ENCODE measurements at regions of chr11 and their contacts with region 1.

Region 1: DNA sequence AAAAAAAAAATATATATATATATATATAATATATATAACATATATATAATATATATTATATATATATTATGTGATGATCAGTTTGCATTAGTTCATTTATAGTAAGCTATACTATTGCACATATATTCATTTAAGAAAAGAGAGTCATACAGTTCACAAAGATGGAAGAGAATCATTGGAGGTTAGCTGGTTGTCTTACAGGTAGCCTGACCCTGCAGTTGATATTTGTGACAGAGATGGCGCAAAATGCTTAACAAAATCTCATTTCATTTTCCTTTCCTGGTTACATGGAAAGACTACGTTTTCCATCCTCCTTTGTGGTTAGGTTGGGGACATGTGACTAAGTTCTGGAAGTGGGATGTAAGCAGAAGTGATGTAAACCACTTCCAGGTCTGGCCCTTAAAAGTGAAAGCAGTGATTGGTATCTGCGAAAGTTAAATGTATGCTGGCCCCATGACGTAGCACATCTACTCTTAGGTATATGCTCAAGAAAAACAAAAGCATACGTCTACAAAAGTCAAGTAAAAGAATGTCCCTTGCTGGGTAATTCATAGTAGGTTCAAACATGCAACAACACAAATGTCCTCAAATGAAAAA is 7.2 kb upstream of the TMEM135 start:
- DNase-seq: peak; percentile 15
- ATAC-seq: no peak
- H3K4me3 ChIP-seq: no peak overlapping the region
- H3K27ac ChIP-seq: no peak overlapping the region
- H3K4me1 ChIP-seq: peaks cover 16% of the 10 kb centered on the region
- H3K27me3 ChIP-seq: no peaks in the 10 kb centered on the region
- CTCF ChIP-seq: 0 out of 2 replicates have a peak, but pooled peaks have one; percentile 10

Region 2: DNA sequence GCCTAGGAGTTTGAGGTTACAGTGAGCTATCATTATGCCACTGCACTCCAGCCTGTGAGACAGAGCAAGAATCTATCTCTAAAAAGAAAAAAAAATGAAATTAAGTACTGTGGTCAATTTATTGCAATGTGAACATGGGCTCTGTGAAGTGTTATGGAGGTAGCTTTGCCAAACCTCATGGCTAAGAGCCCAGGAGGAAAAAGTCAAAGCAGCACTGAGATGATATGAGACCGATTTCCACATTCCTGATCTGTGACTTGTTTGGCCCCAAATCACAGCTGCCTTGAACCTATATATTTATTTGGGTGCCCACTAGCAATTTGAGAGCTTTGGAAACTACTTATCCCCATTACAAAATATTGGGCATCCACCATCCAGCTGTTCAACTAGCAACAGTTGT is 22.6 kb before region 1 on chr11:
- CTCF ChIA-PET with region 1: no interaction called
- POLR2A ChIA-PET with region 1: interaction called, 3 read pairs
- intact Hi-C with region 1: loop called (anchors 1 kb)
- DNase-seq: peak; percentile 31
- ATAC-seq: no peak
- H3K4me3 ChIP-seq: no peak overlapping the region
- H3K27ac ChIP-seq: no peak overlapping the region
- H3K4me1 ChIP-seq: peaks cover 31% of the 10 kb centered on the region
- H3K27me3 ChIP-seq: no peaks in the 10 kb centered on the region
- CTCF ChIP-seq: no peak

Region 3: DNA sequence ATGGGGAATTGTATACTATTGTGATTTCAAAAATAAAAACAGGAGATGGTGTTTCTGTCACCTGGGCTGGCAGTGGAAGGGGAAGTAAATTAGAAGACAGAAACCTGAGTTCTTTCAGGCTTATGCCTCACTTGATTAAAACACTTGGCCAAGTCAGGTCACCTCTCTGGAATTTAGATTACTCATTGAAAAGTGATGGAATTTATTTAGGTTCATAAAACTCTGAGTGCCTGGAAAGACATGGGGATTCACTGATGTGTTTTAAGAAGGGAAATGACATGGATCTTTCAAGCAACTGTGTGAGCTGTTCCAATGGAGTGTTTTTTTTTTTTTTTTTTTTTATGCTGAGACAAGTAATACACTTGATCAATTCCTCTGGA is 407.3 kb after region 1 on chr11:
- CTCF ChIA-PET with region 1: no interaction called
- POLR2A ChIA-PET with region 1: no interaction called
- intact Hi-C with region 1: no loop called
- DNase-seq: peak; percentile 92
- ATAC-seq: peak; percentile 95
- H3K4me3 ChIP-seq: no peak overlapping the region
- H3K27ac ChIP-seq: peak overlapping the region; percentile 3; the same call in 1 of the 2 replicates
- H3K4me1 ChIP-seq: peaks cover 27% of the 10 kb centered on the region
- H3K27me3 ChIP-seq: no peaks in the 10 kb centered on the region
- CTCF ChIP-seq: no peak

Region 4: GRCh38 chr11:88480223-88480622 is 1449.7 kb after region 1 on chr11:
- CTCF ChIA-PET with region 1: no interaction called
- POLR2A ChIA-PET with region 1: no interaction called
- intact Hi-C with region 1: no loop called
- DNase-seq: peak; percentile 97
- ATAC-seq: peak; percentile 25
- H3K4me3 ChIP-seq: no peak overlapping the region
- H3K27ac ChIP-seq: peak overlapping the region; percentile 61
- H3K4me1 ChIP-seq: peaks cover 77% of the 10 kb centered on the region
- H3K27me3 ChIP-seq: no peaks in the 10 kb centered on the region
- CTCF ChIP-seq: no peak